ENCODE measurements at regions of chr11 and their contacts with region 1.

Region 1: DNA sequence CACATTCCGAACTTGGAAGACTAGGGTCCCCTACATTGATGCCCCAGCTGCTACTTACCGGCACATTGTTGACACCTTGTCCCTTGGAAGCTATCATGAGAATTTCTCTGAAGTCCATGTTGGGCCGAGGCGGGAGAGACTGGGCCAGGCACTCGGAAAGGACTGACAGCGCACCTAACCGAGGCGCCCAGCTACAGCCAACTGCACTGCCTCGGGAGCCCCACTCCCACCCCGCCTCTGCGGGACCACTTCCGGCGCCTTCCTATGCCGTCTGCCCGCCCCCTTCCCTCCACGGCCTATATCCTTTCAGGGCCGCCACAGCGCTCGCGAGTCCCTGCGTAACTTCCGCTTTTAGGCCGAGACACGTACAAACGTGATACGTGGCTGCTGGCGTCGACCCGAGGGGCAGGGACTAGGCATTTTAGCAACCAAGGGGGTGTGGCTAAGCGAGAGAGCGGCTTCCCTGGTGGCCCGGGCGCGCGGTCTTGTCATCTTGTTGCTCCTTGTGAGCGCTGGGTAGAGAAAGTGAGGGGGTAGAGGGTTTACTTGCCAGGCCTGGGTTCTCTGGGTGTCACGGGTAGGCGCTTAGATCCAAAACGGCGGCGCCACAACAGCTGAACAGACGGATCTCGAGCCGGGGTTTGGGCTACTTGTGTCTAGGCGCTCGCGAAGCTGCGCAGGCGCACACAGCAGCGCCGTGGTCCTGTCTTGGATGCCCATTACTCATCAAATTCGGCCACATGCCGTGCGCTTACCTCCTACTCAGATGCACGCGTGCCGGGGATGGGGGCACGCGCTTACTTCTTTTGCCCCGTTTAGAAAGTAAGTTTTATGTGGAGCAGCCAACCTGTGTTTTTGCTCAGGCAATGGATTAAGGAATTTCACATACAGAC is at the start of gene SPTY2D1:
- DNase-seq: peak; percentile 99
- H3K4me3 Mint-ChIP-seq: peak within 1 kb of the TSS; percentile 87
- H3K27ac Mint-ChIP-seq: peak within 1 kb of the TSS; percentile 96
- H3K4me1 Mint-ChIP-seq: peaks cover 30% of the 10 kb centered on the region
- H3K27me3 Mint-ChIP-seq: no peaks in the 10 kb centered on the region
- total RNA-seq, gene SPTY2D1: 13.9 to 15.0 TPM

Region 2: GRCh38 chr11:18383388-18384156 is 250.8 kb before region 1 on chr11:
- CTCF ChIA-PET with region 1: no interaction called
- intact Hi-C with region 1: loop called (anchors 1 kb)
- DNase-seq: peak; percentile 92
- H3K4me3 Mint-ChIP-seq: peak overlapping the region; percentile 42
- H3K27ac Mint-ChIP-seq: peak overlapping the region; percentile 89
- H3K4me1 Mint-ChIP-seq: peaks cover 34% of the 10 kb centered on the region
- H3K27me3 Mint-ChIP-seq: no peaks in the 10 kb centered on the region

Region 3: DNA sequence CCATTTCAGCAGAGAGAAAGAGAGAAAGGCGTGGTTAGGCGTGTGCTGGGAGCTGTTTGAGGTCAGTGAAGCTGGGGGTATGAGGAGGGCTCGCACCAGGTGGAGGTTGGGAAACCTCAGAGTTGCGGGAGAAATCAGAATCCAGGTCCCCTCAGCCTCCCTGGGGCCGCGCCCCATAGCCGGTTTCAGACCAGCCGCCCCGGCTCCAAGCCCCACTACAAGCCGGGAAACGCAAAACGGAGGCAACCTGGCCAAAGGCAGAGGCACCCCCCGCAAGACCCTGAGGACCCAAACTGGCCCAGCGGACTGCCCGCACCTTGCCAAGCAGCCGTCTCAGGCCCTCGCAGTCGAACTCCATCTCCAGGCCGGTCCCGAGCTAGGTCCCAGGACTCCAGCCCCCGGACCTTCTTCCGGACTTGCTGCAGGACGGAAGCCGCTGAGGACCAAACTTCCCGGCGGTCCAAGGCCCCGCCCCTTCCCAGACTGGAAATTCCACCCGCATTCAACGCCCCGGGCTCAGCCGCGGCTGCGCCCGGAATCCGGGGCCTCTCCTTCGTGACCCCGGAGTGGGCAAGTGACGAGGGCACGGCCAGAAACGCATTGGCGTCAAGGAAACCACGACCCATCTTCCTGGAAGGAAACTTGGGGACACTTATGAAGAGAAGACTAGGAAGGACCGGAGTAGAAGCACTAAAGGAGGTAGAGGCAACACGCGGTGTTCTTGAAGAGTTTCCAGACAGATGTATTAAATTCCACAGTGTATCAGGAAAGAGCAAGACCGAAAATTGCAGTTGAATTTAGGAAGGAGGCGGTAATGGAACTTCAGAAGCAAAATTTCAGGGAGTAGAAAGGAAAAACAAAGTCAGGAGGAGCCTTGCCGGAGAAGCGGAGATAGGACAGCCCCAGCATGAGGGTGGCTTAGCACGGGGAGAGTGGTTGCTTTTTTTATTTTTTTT is 45.8 kb before region 1 on chr11 and contains the start of gene UEVLD:
- CTCF ChIA-PET with region 1: no interaction called
- intact Hi-C with region 1: loop called (anchors 1 kb)
- DNase-seq: peak; percentile 63
- H3K4me3 Mint-ChIP-seq: no peak within 1 kb of the TSS
- H3K27ac Mint-ChIP-seq: no peak within 1 kb of the TSS
- H3K4me1 Mint-ChIP-seq: peaks cover 8% of the 10 kb centered on the region
- H3K27me3 Mint-ChIP-seq: no peaks in the 10 kb centered on the region
- total RNA-seq, gene UEVLD: 8.9 to 9.2 TPM

Region 4: GRCh38 chr11:18669220-18669598 is 34.8 kb after region 1 on chr11:
- CTCF ChIA-PET with region 1: no interaction called
- intact Hi-C with region 1: loop called (anchors 1 kb)
- DNase-seq: peak; percentile 23
- H3K4me3 Mint-ChIP-seq: no peak overlapping the region
- H3K27ac Mint-ChIP-seq: peak overlapping the region; percentile 63
- H3K4me1 Mint-ChIP-seq: peaks cover 70% of the 10 kb centered on the region
- H3K27me3 Mint-ChIP-seq: no peaks in the 10 kb centered on the region

Measured in activated naive CD4-positive, alpha-beta T cell treated with anti-CD3 and anti-CD28 coated beads for 36 hours (primary cell).